ENCODE measurements at regions of chr4 and their contacts with region 1.

Region 1: DNA sequence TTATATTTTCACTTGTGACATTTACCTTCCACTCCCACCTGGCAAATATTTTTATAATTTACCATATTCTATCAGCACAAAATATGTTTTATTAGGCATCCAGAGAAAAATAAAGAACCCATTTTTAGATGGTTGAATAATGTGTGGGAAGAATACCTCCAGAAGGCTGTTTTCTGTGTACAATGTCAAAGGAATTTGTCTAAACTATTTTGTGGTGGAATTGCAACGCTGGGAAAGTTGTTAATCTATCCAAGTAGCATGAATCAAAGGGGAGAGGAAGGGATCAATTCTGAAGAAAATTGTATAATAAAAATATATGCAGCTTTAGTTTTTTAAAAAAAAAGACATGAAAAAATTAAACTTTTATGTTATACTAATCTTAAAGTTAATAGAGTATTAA is 706.5 kb downstream of the FSTL5 start:
- DNase-seq: no peak
- ATAC-seq: no peak
- H3K4me3 ChIP-seq: no peak overlapping the region
- H3K4me3 Mint-ChIP-seq: no peak overlapping the region
- H3K27ac ChIP-seq: no peak overlapping the region
- H3K27ac Mint-ChIP-seq: no peak overlapping the region
- H3K4me1 ChIP-seq: no peaks in the 10 kb centered on the region
- H3K4me1 Mint-ChIP-seq: no peaks in the 10 kb centered on the region
- H3K27me3 ChIP-seq: no peaks in the 10 kb centered on the region
- H3K27me3 Mint-ChIP-seq: no peaks in the 10 kb centered on the region

Region 2: GRCh38 chr4:160353548-160353947 is 1103.8 kb before region 1 on chr4:
- CTCF ChIA-PET with region 1: no interaction called
- POLR2A ChIA-PET with region 1: interaction called in 1 of 2 experiments, 10 read pairs
- DNase-seq: no peak
- ATAC-seq: no peak
- H3K4me3 ChIP-seq: no peak overlapping the region
- H3K4me3 Mint-ChIP-seq: no peak overlapping the region
- H3K27ac ChIP-seq: no peak overlapping the region
- H3K27ac Mint-ChIP-seq: no peak overlapping the region
- H3K4me1 ChIP-seq: no peaks in the 10 kb centered on the region
- H3K4me1 Mint-ChIP-seq: no peaks in the 10 kb centered on the region
- H3K27me3 ChIP-seq: no peaks in the 10 kb centered on the region
- H3K27me3 Mint-ChIP-seq: no peaks in the 10 kb centered on the region

Measured in T-cell (primary cell).